Calu3 (cell line): ENCODE measurements at regions of chr1 and their contacts with region 1.

Region 1: DNA sequence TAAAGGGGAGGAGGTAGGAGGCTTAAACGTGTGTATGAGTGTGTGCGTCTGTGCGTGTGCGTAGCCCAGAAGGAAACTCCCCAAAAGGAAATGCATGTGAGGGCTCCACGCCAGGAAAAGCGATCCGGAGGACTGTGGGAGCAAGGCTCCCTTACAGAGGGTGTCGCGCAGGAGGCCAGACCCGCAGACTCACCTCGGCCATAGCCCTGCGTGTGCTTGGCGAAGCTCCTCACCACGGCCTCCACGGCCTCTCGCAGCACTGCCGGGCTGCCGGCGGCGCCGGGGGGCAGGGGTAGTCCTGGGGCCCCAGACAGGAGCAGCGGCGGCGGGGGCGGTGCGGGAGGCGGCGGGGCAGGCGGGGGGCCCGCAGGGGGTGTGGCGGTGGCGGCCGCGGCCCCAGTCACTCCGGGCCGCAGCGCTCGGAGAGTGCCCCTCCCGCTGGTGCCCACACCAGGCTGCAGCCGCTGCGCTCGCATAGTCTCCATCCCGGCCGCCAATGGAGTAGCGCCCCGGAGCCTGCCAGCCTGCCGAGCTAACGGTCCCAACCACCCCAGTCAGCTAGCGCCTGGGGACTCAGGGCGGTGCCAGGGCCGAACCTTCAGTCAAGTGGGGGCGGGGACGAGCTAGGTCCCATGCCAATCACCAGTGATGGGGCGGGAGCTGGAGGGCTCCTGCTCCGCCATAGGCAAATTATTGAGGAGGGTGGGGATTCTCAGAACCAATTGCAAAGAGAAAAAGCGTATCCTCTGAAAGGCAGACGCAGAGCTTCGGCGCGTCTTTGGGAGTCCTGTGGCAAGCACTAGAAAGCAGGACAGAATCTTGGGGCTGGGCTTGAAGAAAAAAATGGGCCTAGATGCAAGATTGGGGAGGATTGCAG is at the start of gene LIX1L:
- DNase-seq: peak; percentile 97
- H3K4me3 Mint-ChIP-seq: peak within 1 kb of the TSS; percentile 70
- H3K27ac Mint-ChIP-seq: peak within 1 kb of the TSS; percentile 17
- H3K4me1 Mint-ChIP-seq: peaks cover 42% of the 10 kb centered on the region
- H3K27me3 Mint-ChIP-seq: peaks cover 84% of the 10 kb centered on the region
- CTCF ChIP-seq: no peak
- total RNA-seq, gene LIX1L: 6.3 and 7.2 TPM in 2 replicates

Region 2: DNA sequence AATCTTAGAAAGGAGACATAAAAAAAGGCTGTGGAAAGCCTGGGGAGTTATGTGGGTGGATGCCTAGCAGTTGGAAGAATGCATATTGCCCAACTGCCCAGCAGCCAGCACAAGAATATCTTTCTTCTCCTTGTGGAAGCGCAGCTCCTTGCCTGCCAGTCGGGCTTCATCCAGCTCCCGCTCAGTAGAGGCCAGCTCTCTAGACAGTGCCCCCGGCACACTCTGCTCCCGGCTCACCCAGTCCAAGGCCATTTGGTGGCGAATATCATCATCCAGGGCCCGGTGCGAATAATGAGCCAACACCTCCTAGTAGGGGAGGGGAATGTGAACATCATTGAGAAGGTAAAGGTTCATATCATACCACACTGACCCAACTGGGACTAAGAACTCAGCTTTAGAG is 21.4 kb before region 1 on chr1:
- CTCF ChIA-PET with region 1: no interaction called
- intact Hi-C with region 1: loop called (anchors 2 kb)
- DNase-seq: no peak
- H3K4me3 Mint-ChIP-seq: no peak overlapping the region
- H3K27ac Mint-ChIP-seq: no peak overlapping the region
- H3K4me1 Mint-ChIP-seq: no peaks in the 10 kb centered on the region
- H3K27me3 Mint-ChIP-seq: no peaks in the 10 kb centered on the region
- CTCF ChIP-seq: no peak